AG04450 (cell line): ENCODE measurements at regions of chr3 and their contacts with region 1.

Region 1: GRCh38 chr3:15405448-15406050 is 21.8 kb downstream of the METTL6 start:
- DNase-seq: peak; percentile 23
- H3K4me3 ChIP-seq: no peak overlapping the region
- H3K27ac ChIP-seq: no peak overlapping the region
- H3K27me3 ChIP-seq: no peaks in the 10 kb centered on the region
- CTCF ChIP-seq: peak; percentile 68

Region 2: GRCh38 chr3:15108082-15108545 is 297.4 kb before region 1 on chr3:
- CTCF ChIA-PET with region 1: interaction called, 19 read pairs
- POLR2A ChIA-PET with region 1: no interaction called
- DNase-seq: peak; percentile 50
- H3K4me3 ChIP-seq: no peak overlapping the region
- H3K27ac ChIP-seq: no peak overlapping the region
- H3K27me3 ChIP-seq: peaks cover 9% of the 10 kb centered on the region
- CTCF ChIP-seq: peak; percentile 89

Region 3: GRCh38 chr3:15205934-15206661 is 199.5 kb before region 1 on chr3 and contains the start of gene CAPN7:
- CTCF ChIA-PET with region 1: interaction called, 135 read pairs
- POLR2A ChIA-PET with region 1: no interaction called
- DNase-seq: peak; percentile 83
- H3K4me3 ChIP-seq: peak within 1 kb of the TSS; percentile 92
- H3K27ac ChIP-seq: peak within 1 kb of the TSS; percentile 75
- H3K27me3 ChIP-seq: no peaks in the 10 kb centered on the region
- CTCF ChIP-seq: peak; percentile 65
- polyA plus RNA-seq, gene CAPN7: 21.8 and 29.0 TPM in 2 replicates

Region 4: GRCh38 chr3:15256861-15257341 is 148.6 kb before region 1 on chr3:
- CTCF ChIA-PET with region 1: interaction called, 14 read pairs
- POLR2A ChIA-PET with region 1: no interaction called
- DNase-seq: no peak
- H3K4me3 ChIP-seq: no peak overlapping the region
- H3K27ac ChIP-seq: no peak overlapping the region
- H3K27me3 ChIP-seq: no peaks in the 10 kb centered on the region
- CTCF ChIP-seq: no peak

Region 5: GRCh38 chr3:15377961-15378791 is 27.4 kb before region 1 on chr3:
- CTCF ChIA-PET with region 1: interaction called, 13 read pairs
- POLR2A ChIA-PET with region 1: no interaction called
- DNase-seq: peak; percentile 79
- H3K4me3 ChIP-seq: no peak overlapping the region
- H3K27ac ChIP-seq: no peak overlapping the region
- H3K27me3 ChIP-seq: no peaks in the 10 kb centered on the region
- CTCF ChIP-seq: peak; percentile 90

Region 6: DNA sequence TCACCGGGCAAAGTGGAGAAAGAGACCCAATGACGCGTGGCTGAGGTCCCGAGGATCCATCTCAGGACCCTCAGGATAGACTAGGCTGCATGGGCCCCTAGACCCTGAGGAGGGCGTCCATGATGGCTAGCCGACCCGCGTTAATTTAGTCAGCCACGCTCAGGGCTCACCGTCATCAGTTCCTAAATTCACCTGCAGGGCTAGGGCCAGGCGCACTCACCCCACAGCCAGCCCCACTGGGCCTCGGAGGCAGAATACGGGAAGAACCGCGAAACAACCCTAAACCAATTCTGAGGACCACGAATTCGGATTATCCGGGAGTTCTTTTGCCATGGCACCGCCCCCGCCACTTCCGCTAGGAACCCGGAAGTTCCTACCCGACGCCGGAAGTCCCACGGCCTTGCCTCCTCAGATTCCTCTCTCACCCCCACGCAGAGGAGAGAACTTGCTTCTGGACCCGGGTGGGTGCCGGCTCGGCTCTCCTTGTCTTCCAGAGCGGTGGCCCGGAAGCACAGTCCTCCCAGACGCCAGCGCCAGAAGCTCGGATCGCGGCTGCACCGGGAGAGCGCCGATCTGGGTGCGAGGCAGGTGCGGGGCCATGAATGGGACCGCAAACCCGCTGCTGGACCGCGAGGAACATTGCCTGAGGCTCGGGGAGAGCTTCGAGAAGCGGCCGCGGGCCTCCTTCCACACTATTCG is 21.8 kb after region 1 on chr3 and contains the starts of genes EAF1 and METTL6:
- CTCF ChIA-PET with region 1: interaction called, 14 read pairs
- POLR2A ChIA-PET with region 1: no interaction called
- DNase-seq: peak; percentile 37
- H3K4me3 ChIP-seq: peak within 1 kb of the TSS; percentile 95
- H3K27ac ChIP-seq: peak within 1 kb of the TSS; percentile 73
- H3K27me3 ChIP-seq: no peaks in the 10 kb centered on the region
- CTCF ChIP-seq: peak; percentile 32
- polyA plus RNA-seq, gene EAF1: 9.7 and 11.0 TPM in 2 replicates
- polyA plus RNA-seq, gene METTL6: 23.0 and 25.9 TPM in 2 replicates